Naive thymus-derived CD4-positive, alpha-beta T cell (primary cell): ENCODE measurements at regions of chr10 and their contacts with region 1.

Region 1: GRCh38 chr10:28179006-28179742 is 123.7 kb downstream of the MPP7 start:
- DNase-seq: peak in 7 of 9 donors; percentile 18 to 63 (median 49)
- ATAC-seq: peak; percentile 86
- H3K4me3 ChIP-seq: peak overlapping the region; percentile 55
- H3K4me3 Mint-ChIP-seq: peak overlapping the region; percentile 0 to 98 (median 87)
- H3K27ac ChIP-seq: peak overlapping the region; percentile 54
- H3K27ac Mint-ChIP-seq: peak overlapping the region; percentile 77 to 98 (median 92)
- H3K4me1 ChIP-seq: peaks cover 10 to 12% of the 10 kb centered on the region in 2 donors
- H3K4me1 Mint-ChIP-seq: peaks cover 17 to 70% (median 55%) of the 10 kb centered on the region in 7 donors
- H3K27me3 ChIP-seq: no peaks in the 10 kb centered on the region
- H3K27me3 Mint-ChIP-seq: peaks cover 0 to 9% (median 0%) of the 10 kb centered on the region in 5 donors

Region 2: DNA sequence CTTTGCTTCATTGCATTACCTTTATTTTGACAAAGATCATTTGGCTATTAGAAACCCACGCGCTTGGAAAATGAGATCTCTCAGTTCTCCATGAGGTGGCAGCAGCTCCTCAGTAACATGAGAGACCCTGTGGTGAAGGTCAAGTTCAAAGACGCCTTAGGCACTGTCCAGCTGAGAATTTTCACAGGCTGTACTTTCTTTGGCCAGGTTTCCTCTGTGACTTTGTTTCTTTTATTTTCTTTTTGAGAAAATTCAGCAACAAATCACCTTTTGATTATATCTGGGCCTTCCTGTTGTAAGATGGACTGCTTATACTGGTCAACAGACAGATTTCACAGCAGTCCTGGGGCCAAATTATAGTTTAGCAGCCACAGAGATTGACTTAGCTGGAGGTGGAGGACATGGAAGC is 620.6 kb before region 1 on chr10:
- CTCF ChIA-PET with region 1: no interaction called
- POLR2A ChIA-PET with region 1: no interaction called
- intact Hi-C with region 1: loop called (anchors 2 to 10 kb)
- DNase-seq: peak in 3 of 9 donors; percentile 10 to 25 (median 15)
- ATAC-seq: peak; percentile 63
- H3K4me3 ChIP-seq: no peak overlapping the region
- H3K4me3 Mint-ChIP-seq: no peak overlapping the region
- H3K27ac ChIP-seq: no peak overlapping the region
- H3K27ac Mint-ChIP-seq: peak overlapping the region in 1 of 9 donors; percentile 36
- H3K4me1 ChIP-seq: peaks cover 0 to under 1% of the 10 kb centered on the region in 2 donors
- H3K4me1 Mint-ChIP-seq: peaks cover 0 to 4% (median 0%) of the 10 kb centered on the region in 7 donors
- H3K27me3 ChIP-seq: no peaks in the 10 kb centered on the region
- H3K27me3 Mint-ChIP-seq: peaks cover 0 to 16% (median 0%) of the 10 kb centered on the region in 5 donors

Region 3: GRCh38 chr10:27783660-27784059 is 395.5 kb before region 1 on chr10:
- CTCF ChIA-PET with region 1: no interaction called
- POLR2A ChIA-PET with region 1: no interaction called
- intact Hi-C with region 1: loop called in 1 of 2 experiments (anchors 1 kb)
- DNase-seq: peak in 6 of 9 donors; percentile 8 to 39 (median 20)
- ATAC-seq: peak; percentile 77
- H3K4me3 ChIP-seq: no peak overlapping the region
- H3K4me3 Mint-ChIP-seq: no peak overlapping the region
- H3K27ac ChIP-seq: no peak overlapping the region
- H3K27ac Mint-ChIP-seq: no peak overlapping the region
- H3K4me1 ChIP-seq: no peaks in the 10 kb centered on the region
- H3K4me1 Mint-ChIP-seq: no peaks in the 10 kb centered on the region
- H3K27me3 ChIP-seq: no peaks in the 10 kb centered on the region
- H3K27me3 Mint-ChIP-seq: peaks cover 4 to 26% (median 15%) of the 10 kb centered on the region in 5 donors

Region 4: DNA sequence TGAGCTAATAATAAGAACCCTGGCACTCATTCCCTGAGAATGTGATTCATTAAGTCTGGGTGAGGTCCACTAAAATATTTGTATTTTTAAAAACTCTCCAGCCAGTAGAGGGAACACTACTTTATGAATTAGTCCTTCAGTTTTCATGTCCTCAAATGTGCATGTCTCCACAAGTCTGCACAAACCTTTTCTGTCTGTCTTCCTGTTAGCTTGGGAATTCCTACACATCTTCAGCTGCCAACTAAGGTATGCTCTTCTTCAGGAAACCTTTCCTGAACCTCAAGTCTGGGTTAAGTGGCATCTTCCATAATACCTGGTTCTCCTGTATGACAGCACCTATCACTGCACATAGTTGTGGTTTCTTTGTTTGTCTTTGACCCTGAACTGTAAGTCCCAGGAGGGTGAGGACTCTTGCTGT is 313.9 kb before region 1 on chr10:
- CTCF ChIA-PET with region 1: interaction called, 3 read pairs
- POLR2A ChIA-PET with region 1: interaction called, 3 read pairs
- intact Hi-C with region 1: loop called in 1 of 2 experiments (anchors 1 kb)
- DNase-seq: no peak
- ATAC-seq: no peak
- H3K4me3 ChIP-seq: no peak overlapping the region
- H3K4me3 Mint-ChIP-seq: no peak overlapping the region
- H3K27ac ChIP-seq: no peak overlapping the region
- H3K27ac Mint-ChIP-seq: no peak overlapping the region
- H3K4me1 ChIP-seq: no peaks in the 10 kb centered on the region
- H3K4me1 Mint-ChIP-seq: no peaks in the 10 kb centered on the region
- H3K27me3 ChIP-seq: no peaks in the 10 kb centered on the region
- H3K27me3 Mint-ChIP-seq: peaks cover 0 to 34% (median 9%) of the 10 kb centered on the region in 5 donors

Region 5: DNA sequence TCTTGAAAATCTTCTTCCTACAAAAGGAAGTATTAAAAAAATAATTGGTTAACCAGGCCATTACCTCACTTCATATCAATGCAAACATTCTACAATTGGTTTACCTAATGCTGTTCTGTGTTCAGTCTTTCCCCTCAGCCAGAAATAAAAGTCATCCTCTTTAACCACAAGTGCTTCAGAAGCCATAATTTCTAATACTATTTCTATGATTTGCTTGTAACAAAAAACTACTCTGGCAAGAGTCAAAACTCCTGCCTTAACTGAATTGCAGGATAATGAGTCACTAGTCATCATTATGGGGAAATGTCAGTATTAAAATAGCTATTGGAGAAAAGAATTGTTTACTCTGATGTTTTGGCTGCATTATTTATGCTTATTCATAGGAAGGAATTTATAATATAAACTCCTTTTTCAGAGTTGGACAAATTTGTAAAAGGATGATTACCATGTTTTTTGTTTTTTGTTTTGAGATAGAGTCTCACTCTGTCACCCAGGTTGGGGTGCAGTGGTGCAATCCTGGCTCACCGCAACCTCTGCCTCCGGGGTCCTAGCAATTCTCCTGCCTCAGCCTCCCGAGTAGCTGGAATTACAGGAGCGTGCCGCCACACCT is 124.8 kb before region 1 on chr10:
- CTCF ChIA-PET with region 1: no interaction called
- POLR2A ChIA-PET with region 1: no interaction called
- intact Hi-C with region 1: no loop called
- DNase-seq: no peak
- ATAC-seq: no peak
- H3K4me3 ChIP-seq: no peak overlapping the region
- H3K4me3 Mint-ChIP-seq: no peak overlapping the region
- H3K27ac ChIP-seq: no peak overlapping the region
- H3K27ac Mint-ChIP-seq: peak overlapping the region in 1 of 9 donors; percentile 41
- H3K4me1 ChIP-seq: no peaks in the 10 kb centered on the region
- H3K4me1 Mint-ChIP-seq: no peaks in the 10 kb centered on the region
- H3K27me3 ChIP-seq: no peaks in the 10 kb centered on the region
- H3K27me3 Mint-ChIP-seq: no peaks in the 10 kb centered on the region

Region 6: DNA sequence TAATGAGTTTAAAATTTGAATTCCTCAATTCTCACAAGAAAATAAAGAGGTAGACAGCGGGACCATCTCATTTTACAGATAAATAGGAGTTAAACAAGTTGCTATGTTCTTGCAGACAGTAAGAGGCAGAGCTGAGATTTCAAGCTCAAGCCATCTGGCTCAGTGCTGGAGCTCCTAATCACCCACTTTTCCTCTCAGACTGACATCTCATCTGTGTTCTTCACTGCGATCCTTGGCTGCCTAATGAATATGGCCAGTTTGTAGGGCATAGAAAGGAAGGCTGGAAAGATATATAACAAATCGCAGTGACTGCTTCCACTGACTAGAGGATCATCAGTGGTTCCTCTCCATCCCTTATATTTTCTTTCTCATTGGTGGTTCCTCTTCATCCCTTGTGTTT is 27.5 kb before region 1 on chr10:
- CTCF ChIA-PET with region 1: no interaction called
- POLR2A ChIA-PET with region 1: no interaction called
- intact Hi-C with region 1: no loop called
- DNase-seq: no peak
- ATAC-seq: no peak
- H3K4me3 ChIP-seq: no peak overlapping the region
- H3K4me3 Mint-ChIP-seq: no peak overlapping the region
- H3K27ac ChIP-seq: no peak overlapping the region
- H3K27ac Mint-ChIP-seq: peak overlapping the region in 2 of 9 donors; percentile 0 to 33
- H3K4me1 ChIP-seq: no peaks in the 10 kb centered on the region
- H3K4me1 Mint-ChIP-seq: peaks cover 0 to 24% (median 11%) of the 10 kb centered on the region in 7 donors
- H3K27me3 ChIP-seq: no peaks in the 10 kb centered on the region
- H3K27me3 Mint-ChIP-seq: no peaks in the 10 kb centered on the region

Region 7: DNA sequence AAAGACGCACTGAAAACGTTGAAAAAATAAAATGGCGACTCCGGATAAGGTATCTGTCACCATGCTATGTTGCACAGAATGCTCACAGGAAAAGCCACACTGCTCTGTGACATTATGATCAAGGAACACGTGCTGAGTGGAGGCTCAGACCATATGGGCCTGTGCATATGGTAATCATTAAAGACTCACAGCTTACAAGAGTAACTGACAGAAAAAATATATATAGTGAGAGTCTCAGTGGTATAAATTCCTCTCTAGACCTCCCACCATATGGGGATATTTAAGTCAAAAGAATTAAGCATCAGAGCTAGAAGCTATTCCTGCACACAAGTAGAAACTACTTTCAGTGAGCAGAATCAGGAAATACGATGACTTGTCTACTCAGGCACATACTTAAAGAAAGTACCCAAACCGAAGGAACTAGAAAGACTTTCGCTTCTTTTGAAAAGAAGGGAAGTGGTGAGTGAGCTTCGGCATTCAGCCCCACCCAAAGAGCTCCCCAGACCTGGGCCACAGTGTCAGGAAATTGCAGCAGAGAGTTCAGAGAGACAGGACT is 188.8 kb after region 1 on chr10:
- CTCF ChIA-PET with region 1: interaction called, 3 read pairs
- POLR2A ChIA-PET with region 1: no interaction called
- intact Hi-C with region 1: loop called in 1 of 2 experiments (anchors 1 kb)
- DNase-seq: peak in 8 of 9 donors; percentile 54 to 88 (median 83)
- ATAC-seq: peak; percentile 97
- H3K4me3 ChIP-seq: peak overlapping the region; percentile 18
- H3K4me3 Mint-ChIP-seq: peak overlapping the region; percentile 63 to 93 (median 76)
- H3K27ac ChIP-seq: peak overlapping the region; percentile 78
- H3K27ac Mint-ChIP-seq: peak overlapping the region; percentile 90 to 99 (median 96)
- H3K4me1 ChIP-seq: peaks cover 44 to 54% of the 10 kb centered on the region in 2 donors
- H3K4me1 Mint-ChIP-seq: peaks cover 39 to 80% (median 60%) of the 10 kb centered on the region in 7 donors
- H3K27me3 ChIP-seq: no peaks in the 10 kb centered on the region
- H3K27me3 Mint-ChIP-seq: peaks cover 0 to 5% (median 0%) of the 10 kb centered on the region in 5 donors

Region 8: GRCh38 chr10:28541717-28542365 is 362.7 kb after region 1 on chr10:
- CTCF ChIA-PET with region 1: no interaction called
- POLR2A ChIA-PET with region 1: no interaction called
- intact Hi-C with region 1: no loop called
- DNase-seq: no peak
- ATAC-seq: peak; percentile 28
- H3K4me3 ChIP-seq: no peak overlapping the region
- H3K4me3 Mint-ChIP-seq: peak overlapping the region in 7 of 10 donors; percentile 6 to 58 (median 30)
- H3K27ac ChIP-seq: no peak overlapping the region
- H3K27ac Mint-ChIP-seq: peak overlapping the region in 2 of 9 donors; percentile 26 to 28
- H3K4me1 ChIP-seq: peaks cover 28 to 41% of the 10 kb centered on the region in 2 donors
- H3K4me1 Mint-ChIP-seq: peaks cover 40 to 86% (median 77%) of the 10 kb centered on the region in 7 donors
- H3K27me3 ChIP-seq: no peaks in the 10 kb centered on the region
- H3K27me3 Mint-ChIP-seq: no peaks in the 10 kb centered on the region

Region 9: DNA sequence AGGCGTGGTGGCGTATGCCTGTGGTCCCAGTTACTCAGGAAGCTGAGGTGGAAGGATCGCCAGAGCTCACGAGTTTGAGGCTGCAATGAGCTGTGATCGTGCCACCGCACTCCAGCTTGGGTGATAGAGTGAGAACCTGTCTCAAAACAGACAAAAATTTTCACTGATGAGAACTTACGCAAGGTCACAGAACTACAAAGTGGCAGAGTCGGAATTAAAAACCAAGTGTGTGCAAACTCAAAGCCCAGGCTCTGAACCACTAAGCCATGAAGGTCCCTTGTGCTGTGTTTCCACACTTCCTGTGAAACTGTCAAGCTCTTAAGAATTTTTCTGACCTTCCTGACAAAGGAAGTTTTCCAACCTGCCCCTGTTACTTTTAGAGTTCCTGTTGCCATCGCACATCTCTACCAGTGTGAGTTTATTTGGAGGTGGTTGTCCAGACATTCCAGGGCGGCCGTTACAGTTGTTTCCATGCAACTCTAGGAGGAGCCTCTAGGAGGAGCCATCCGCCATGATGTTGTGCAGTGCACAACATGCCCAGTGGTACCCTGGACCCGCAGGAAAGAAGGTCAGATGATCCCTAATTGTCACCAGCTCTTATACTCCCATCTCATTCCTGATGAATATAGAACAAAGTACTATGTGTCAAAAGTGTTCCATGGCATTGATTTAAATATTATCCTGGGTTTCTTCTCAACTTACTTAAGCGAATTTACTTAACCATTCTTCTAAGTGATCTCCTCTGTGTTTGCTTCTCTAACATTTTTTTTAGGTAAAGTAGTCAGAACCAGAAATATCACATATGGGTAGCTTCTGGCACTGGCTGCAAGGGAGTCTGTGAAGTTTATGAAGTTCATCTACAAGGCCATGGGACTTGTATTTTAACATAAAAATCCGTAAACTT is 1060.6 kb after region 1 on chr10:
- CTCF ChIA-PET with region 1: no interaction called
- POLR2A ChIA-PET with region 1: no interaction called
- intact Hi-C with region 1: no loop called
- DNase-seq: no peak
- ATAC-seq: no peak
- H3K4me3 ChIP-seq: no peak overlapping the region
- H3K4me3 Mint-ChIP-seq: no peak overlapping the region
- H3K27ac ChIP-seq: no peak overlapping the region
- H3K27ac Mint-ChIP-seq: no peak overlapping the region
- H3K4me1 ChIP-seq: no peaks in the 10 kb centered on the region
- H3K4me1 Mint-ChIP-seq: peaks cover 0 to 2% (median 0%) of the 10 kb centered on the region in 7 donors
- H3K27me3 ChIP-seq: no peaks in the 10 kb centered on the region
- H3K27me3 Mint-ChIP-seq: peaks cover 0 to 13% (median 11%) of the 10 kb centered on the region in 5 donors